ENCODE measurements at regions of chr13 and their contacts with region 1.

Region 1: GRCh38 chr13:51767100-51767499 is 36.9 kb downstream of the DHRS12 start:
- DNase-seq: no peak
- ATAC-seq: peak; percentile 38
- H3K4me3 Mint-ChIP-seq: no peak overlapping the region
- H3K27ac Mint-ChIP-seq: no peak overlapping the region; the same call in 1 of the 2 replicates
- H3K4me1 Mint-ChIP-seq: peaks cover 23% of the 10 kb centered on the region
- H3K27me3 Mint-ChIP-seq: no peaks in the 10 kb centered on the region
- CTCF ChIP-seq: no peak

Region 2: DNA sequence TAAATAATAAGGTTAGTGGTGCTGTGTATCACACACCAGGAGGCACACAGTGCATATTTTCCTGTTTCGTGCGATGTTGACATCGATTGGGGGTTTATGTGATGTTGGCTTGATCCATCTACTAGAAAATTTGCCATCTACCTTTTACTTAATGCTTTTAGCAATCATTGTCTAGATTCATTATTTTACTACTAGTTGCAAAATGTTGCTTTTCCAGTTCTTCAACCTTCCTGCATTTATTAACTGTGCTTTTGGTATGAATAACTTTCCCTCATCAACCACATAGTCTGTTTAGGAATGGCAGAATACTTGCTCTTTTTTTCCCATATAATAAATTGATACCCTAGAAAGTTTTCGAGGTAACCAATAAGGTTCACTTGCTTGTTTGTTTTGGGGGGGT is 673.5 kb before region 1 on chr13:
- CTCF ChIA-PET with region 1: no interaction called
- POLR2A ChIA-PET with region 1: no interaction called
- DNase-seq: no peak
- ATAC-seq: no peak
- H3K4me3 Mint-ChIP-seq: no peak overlapping the region
- H3K27ac Mint-ChIP-seq: no peak overlapping the region
- H3K4me1 Mint-ChIP-seq: peaks cover 19% of the 10 kb centered on the region
- H3K27me3 Mint-ChIP-seq: no peaks in the 10 kb centered on the region
- CTCF ChIP-seq: no peak

Region 3: DNA sequence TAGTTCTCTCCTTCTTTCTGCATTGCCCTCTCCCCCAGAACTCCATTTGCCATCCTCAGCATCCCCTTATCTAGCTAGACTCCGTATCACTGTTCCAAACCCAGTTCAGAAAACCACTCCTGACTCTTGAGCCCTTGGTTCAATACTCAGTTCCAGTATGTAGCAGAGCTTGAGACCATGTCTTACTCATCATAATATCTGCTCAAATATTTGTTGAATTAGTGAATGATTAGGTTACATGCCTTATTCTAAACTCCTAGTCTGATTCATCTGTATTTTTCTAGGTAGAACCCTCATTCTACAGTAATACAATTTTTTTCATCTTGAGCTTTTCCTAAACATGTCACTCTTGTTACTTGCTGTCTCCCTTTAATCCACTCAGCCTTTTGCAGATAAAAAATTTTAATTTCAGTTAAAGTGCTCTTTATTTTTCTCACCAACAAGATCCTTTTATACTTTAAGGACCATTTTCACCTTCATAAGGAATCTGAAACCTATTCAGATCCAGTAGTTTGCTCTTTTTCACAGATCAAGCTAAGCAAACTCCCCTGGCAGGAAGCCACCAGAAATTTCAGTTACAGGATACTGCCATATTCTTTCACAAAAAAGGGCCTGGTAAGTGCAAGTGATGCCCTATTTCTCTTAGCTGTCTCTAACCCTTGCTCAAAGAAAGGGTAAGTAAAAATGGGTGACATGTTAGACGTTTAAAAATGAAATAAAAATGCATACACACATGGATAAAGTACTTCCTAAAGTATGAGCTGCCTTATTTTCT is 291.2 kb before region 1 on chr13:
- CTCF ChIA-PET with region 1: interaction called, 13 read pairs
- POLR2A ChIA-PET with region 1: no interaction called
- DNase-seq: no peak
- ATAC-seq: no peak
- H3K4me3 Mint-ChIP-seq: no peak overlapping the region
- H3K27ac Mint-ChIP-seq: no peak overlapping the region
- H3K4me1 Mint-ChIP-seq: no peaks in the 10 kb centered on the region
- H3K27me3 Mint-ChIP-seq: no peaks in the 10 kb centered on the region
- CTCF ChIP-seq: no peak

Region 4: DNA sequence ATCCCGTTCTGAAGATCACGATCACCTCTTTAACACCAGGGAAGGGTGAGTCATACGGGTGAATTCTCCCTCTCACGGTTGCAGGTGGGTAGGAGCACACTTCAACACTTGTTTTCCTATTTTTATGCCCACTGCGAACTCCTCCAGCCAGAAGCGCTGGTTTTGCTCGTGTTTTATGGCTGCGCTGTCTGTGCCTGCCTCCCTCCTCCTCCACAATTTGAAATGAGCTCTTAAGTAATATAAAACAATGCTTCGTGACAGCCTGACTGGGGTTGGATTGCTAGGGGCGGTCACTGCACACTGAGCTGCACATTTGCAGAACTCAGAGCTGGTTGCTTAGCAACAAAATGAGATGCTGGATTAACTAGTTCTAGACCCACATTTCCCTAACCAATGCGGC is 107.6 kb after region 1 on chr13:
- CTCF ChIA-PET with region 1: no interaction called
- POLR2A ChIA-PET with region 1: no interaction called
- DNase-seq: no peak
- ATAC-seq: no peak
- H3K4me3 Mint-ChIP-seq: no peak overlapping the region
- H3K27ac Mint-ChIP-seq: no peak overlapping the region
- H3K4me1 Mint-ChIP-seq: no peaks in the 10 kb centered on the region
- H3K27me3 Mint-ChIP-seq: peaks cover 5% of the 10 kb centered on the region
- CTCF ChIP-seq: no peak

Measured in WTC11 (cell line).